Activated CD8-positive, alpha-beta T cell treated with anti-CD3 and anti-CD28 coated beads for 36 hours (primary cell): ENCODE measurements at regions of chr21 and their contacts with region 1.

Region 1: DNA sequence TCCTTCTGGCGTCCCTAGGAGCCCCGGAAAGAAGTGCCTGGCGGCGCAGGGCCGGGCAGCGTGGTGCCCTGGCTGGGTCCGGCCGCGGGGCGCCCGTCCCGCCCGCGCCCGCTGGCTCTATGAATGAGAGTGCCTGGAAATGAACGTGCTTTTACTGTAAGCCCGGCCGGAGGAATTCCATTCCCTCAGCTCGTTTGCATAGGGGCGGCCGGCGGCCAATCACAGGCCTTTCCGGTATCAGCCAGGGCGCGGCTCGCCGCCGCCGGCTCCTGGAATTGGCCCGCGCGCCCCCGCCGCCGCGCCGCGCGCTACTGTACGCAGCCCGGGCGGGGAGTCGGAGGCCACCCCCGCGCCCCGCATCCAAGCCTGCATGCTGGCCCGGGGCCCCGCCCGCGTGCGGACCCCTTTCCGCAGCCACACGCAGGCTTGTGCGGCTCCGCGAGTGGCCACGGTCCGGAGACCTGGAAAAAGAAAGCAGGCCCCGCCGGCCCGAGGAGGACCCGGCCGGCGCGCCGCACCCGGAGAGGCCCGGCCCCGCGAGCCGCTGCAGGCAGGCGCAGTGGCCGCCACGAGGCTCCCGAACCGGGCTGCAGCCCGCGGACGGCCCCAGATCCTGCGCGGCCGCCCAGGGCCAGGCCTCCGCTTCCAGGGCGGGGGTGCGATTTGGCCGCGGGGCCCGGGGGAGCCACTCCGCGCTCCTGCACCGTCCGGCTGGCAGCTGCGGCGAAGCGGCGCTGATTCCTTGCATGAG is 160.4 kb downstream of the RUNX1 start:
- DNase-seq: peak; percentile 87
- ATAC-seq: peak; percentile 50
- H3K4me3 Mint-ChIP-seq: peak overlapping the region; percentile 93
- H3K27ac Mint-ChIP-seq: peak overlapping the region; percentile 98
- H3K4me1 Mint-ChIP-seq: peaks cover 42% of the 10 kb centered on the region
- H3K27me3 Mint-ChIP-seq: peaks cover 1% of the 10 kb centered on the region
- CTCF ChIP-seq: no peak

Region 2: DNA sequence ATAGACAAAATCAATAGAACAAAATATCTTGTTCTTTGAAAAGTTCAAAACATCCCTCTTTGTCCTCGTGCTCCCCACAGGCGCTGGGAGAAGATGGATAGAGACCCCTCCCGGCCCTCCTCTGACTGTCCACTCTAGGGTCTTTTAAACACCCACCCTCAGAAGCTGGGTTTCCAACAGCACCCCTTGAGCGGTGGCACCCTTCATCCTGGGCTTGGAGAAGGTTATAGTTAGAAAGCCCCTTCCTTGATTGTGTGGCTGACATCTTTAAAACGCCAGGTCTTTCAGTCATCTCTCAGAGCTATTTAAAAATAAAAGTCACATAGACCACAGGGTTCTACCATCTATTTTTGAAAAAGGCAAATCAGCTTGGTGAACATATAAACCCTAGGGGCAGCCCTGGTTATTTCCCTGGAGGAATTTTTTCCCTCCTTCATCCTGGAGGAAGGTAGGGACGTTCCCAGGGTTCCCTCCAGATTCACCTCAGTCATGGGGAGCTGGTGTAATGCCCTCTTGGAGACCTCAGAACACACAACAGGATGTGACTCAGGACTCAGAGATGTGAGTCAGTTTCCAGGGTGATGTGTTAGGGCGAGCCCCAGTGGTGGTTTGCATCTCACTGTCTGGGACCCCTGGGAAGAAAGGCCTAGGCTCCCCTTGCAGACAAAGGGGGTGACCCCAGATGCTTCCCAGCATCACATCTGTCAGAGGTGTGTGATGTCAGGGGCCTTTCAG is 81.4 kb before region 1 on chr21:
- CTCF ChIA-PET with region 1: interaction called, 6 read pairs
- POLR2A ChIA-PET with region 1: interaction called, 9 read pairs
- intact Hi-C with region 1: loop called (anchors 5 kb)
- DNase-seq: peak; percentile 87
- ATAC-seq: peak; percentile 91
- H3K4me3 Mint-ChIP-seq: peak overlapping the region; percentile 36
- H3K27ac Mint-ChIP-seq: peak overlapping the region; percentile 88
- H3K4me1 Mint-ChIP-seq: peaks cover 81% of the 10 kb centered on the region
- H3K27me3 Mint-ChIP-seq: no peaks in the 10 kb centered on the region
- CTCF ChIP-seq: no peak

Region 3: GRCh38 chr21:34933609-34934335 is 45.0 kb after region 1 on chr21:
- CTCF ChIA-PET with region 1: interaction called, 20 read pairs
- POLR2A ChIA-PET with region 1: interaction called, 53 read pairs
- intact Hi-C with region 1: loop called (anchors 2 kb)
- DNase-seq: peak; percentile 49
- ATAC-seq: peak; percentile 84
- H3K4me3 Mint-ChIP-seq: peak overlapping the region; percentile 75
- H3K27ac Mint-ChIP-seq: peak overlapping the region; percentile 98
- H3K4me1 Mint-ChIP-seq: peaks cover 82% of the 10 kb centered on the region
- H3K27me3 Mint-ChIP-seq: no peaks in the 10 kb centered on the region
- CTCF ChIP-seq: no peak

Region 4: DNA sequence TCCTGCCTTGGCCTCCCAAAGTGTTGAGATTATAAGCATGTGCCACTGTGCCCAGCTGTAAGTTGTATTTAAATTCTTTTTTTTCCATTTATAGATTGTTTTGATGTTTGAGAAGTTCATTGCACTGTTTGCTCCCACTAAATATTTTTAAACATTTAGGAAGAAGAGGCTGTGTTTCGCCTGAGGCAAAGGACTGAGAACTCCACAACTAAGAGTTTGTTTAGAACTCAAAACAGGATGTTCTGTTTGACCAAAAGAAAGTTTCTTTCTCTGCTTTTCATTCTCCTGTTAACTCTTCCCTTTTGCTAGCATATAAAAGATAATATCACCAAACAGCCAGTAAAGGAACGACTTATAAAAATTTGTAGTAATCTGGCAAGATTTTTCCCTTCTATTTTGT is 73.4 kb after region 1 on chr21:
- CTCF ChIA-PET with region 1: interaction called, 13 read pairs
- POLR2A ChIA-PET with region 1: interaction called, 27 read pairs
- intact Hi-C with region 1: no loop called
- DNase-seq: no peak
- ATAC-seq: no peak
- H3K4me3 Mint-ChIP-seq: peak overlapping the region; percentile 57
- H3K27ac Mint-ChIP-seq: peak overlapping the region; percentile 95
- H3K4me1 Mint-ChIP-seq: peaks cover 78% of the 10 kb centered on the region
- H3K27me3 Mint-ChIP-seq: no peaks in the 10 kb centered on the region
- CTCF ChIP-seq: no peak

Region 5: GRCh38 chr21:34974162-34974981 is 85.6 kb after region 1 on chr21:
- CTCF ChIA-PET with region 1: interaction called, 12 read pairs
- POLR2A ChIA-PET with region 1: interaction called, 27 read pairs
- intact Hi-C with region 1: no loop called
- DNase-seq: peak; percentile 69
- ATAC-seq: peak; percentile 92
- H3K4me3 Mint-ChIP-seq: peak overlapping the region; percentile 52
- H3K27ac Mint-ChIP-seq: peak overlapping the region; percentile 61
- H3K4me1 Mint-ChIP-seq: peaks cover 79% of the 10 kb centered on the region
- H3K27me3 Mint-ChIP-seq: peaks cover 3% of the 10 kb centered on the region
- CTCF ChIP-seq: no peak

Region 6: GRCh38 chr21:35026617-35027562 is 138.1 kb after region 1 on chr21:
- CTCF ChIA-PET with region 1: interaction called, 14 read pairs
- POLR2A ChIA-PET with region 1: interaction called, 18 read pairs
- intact Hi-C with region 1: no loop called
- DNase-seq: peak; percentile 91
- ATAC-seq: peak; percentile 79
- H3K4me3 Mint-ChIP-seq: peak overlapping the region; percentile 80
- H3K27ac Mint-ChIP-seq: peak overlapping the region; percentile 97
- H3K4me1 Mint-ChIP-seq: peaks cover 80% of the 10 kb centered on the region
- H3K27me3 Mint-ChIP-seq: no peaks in the 10 kb centered on the region
- CTCF ChIP-seq: no peak

Region 7: GRCh38 chr21:35400233-35400957 is 511.7 kb after region 1 on chr21:
- CTCF ChIA-PET with region 1: interaction called, 9 read pairs
- POLR2A ChIA-PET with region 1: no interaction called
- intact Hi-C with region 1: loop called (anchors 2 kb)
- DNase-seq: peak; percentile 43
- ATAC-seq: peak; percentile 93
- H3K4me3 Mint-ChIP-seq: no peak overlapping the region
- H3K27ac Mint-ChIP-seq: no peak overlapping the region
- H3K4me1 Mint-ChIP-seq: peaks cover 15% of the 10 kb centered on the region
- H3K27me3 Mint-ChIP-seq: peaks cover 1% of the 10 kb centered on the region
- CTCF ChIP-seq: peak; percentile 73